Cardiac septum (tissue), 1 donor: ENCODE measurements at regions of chr5 and their contacts with region 1.

Region 1: DNA sequence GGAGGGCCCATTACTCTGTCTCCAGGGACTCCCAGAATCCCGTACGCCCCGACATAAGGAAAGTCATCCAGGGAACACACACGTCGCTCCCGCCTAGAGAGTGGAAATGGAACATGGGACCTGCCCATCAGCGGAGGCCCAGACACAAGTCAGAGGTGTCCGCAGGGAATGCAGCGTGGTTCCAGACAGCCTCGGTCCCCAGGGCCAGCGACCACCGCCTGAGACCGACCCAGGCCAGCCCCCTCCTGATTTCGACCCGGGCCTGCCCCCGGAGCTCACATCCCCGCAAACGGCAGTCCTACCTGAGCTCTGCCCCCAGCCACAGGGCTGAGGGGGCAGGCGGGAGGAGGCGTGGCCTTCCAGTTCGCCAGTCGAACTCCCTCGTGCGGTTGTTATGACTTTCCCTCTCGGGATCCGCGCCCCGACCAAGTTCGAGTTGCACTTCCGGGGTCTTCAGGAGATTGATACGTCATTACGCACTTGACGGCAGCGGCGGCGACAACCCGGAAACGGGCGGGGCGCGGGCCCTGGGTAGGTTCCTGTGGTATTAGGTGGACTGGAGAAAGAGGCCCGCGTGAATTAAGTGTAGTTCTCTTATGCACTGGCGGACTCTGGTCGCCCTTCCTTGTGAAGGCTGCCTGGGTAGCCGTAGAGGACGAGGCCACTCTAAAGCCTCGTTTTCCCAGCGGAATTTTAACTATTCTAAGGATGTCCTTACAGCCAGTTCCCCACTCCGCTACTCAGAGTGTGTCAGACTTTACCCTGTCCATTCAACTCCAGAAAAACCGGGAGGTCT is 370.0 kb upstream of the POU5F2 start:
- DNase-seq: peak; percentile 97

Region 2: GRCh38 chr5:93620487-93621326 is 490.7 kb before region 1 on chr5:
- intact Hi-C with region 1: loop called (anchors 5 kb)
- DNase-seq: peak; percentile 84